Activated CD4-positive, alpha-beta memory T cell treated with anti-CD3 and anti-CD28 coated beads, Interleukin-2, amount 10 ng/mL, durations not matched to agents 7 days and 5 days (primary cell): ENCODE measurements at regions of chr3 and their contacts with region 1.

Region 1: DNA sequence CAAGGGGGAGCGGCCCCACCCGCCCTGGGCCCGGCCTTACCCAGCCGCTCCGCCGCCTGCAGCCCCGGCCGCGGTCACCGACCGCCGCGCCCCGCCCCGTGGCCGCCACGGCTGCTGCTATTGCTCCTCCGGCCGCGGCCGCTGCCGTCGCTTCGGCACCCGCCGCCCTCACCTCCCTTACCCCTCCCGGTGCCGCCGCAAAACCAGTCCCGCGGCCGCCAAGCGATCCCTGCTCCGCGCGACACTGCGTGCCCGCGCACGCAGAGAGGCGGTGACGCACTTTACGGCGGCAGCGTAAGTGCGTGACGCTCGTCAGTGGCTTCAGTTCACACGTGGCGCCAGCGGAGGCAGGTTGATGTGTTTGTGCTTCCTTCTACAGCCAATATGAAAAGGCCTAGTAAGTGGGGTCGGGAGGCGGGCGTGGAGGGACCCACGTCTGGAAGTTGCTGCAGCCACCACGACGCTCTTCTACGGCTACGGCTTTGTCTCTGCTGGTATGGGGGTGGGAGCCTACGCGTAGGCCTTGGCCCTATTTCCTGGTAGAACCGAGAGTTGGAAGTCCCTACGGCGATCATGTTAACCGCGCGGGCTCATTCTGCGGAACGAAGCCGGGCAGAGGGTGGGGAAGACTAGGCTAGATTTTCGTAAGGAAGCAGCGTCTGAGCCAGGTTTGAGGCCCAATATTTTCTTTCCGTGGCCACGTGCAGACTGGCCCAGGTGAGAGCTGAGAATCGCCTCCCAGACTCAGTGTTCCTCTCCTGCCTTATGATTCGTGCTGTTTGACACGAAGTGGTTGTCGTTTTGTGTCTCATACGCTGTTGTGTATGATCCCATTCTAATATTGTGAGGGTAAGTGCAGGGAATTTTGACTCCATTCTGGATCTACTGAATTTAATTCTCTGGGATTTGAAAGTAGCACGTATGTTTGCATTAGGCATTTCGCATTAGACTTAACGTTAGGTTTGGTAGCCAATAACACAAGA is at the starts of genes GNL3 and PBRM1:
- DNase-seq: peak; percentile 95
- H3K4me3 Mint-ChIP-seq: peak within 1 kb of the TSS; percentile 91
- H3K27ac Mint-ChIP-seq: peak within 1 kb of the TSS; percentile 90
- H3K4me1 Mint-ChIP-seq: peaks cover 79% of the 10 kb centered on the region
- H3K27me3 Mint-ChIP-seq: no peaks in the 10 kb centered on the region
- total RNA-seq, gene GNL3: 66.8 to 67.5 TPM
- total RNA-seq, gene PBRM1: 69.0 to 70.2 TPM

Region 2: GRCh38 chr3:52670621-52671521 is 15.1 kb before region 1 on chr3:
- CTCF ChIA-PET with region 1: no interaction called
- POLR2A ChIA-PET with region 1: interaction called, 12 read pairs
- DNase-seq: peak; percentile 71
- H3K4me3 Mint-ChIP-seq: peak overlapping the region; percentile 43
- H3K27ac Mint-ChIP-seq: peak overlapping the region; percentile 86
- H3K4me1 Mint-ChIP-seq: peaks cover 30% of the 10 kb centered on the region
- H3K27me3 Mint-ChIP-seq: no peaks in the 10 kb centered on the region

Region 3: DNA sequence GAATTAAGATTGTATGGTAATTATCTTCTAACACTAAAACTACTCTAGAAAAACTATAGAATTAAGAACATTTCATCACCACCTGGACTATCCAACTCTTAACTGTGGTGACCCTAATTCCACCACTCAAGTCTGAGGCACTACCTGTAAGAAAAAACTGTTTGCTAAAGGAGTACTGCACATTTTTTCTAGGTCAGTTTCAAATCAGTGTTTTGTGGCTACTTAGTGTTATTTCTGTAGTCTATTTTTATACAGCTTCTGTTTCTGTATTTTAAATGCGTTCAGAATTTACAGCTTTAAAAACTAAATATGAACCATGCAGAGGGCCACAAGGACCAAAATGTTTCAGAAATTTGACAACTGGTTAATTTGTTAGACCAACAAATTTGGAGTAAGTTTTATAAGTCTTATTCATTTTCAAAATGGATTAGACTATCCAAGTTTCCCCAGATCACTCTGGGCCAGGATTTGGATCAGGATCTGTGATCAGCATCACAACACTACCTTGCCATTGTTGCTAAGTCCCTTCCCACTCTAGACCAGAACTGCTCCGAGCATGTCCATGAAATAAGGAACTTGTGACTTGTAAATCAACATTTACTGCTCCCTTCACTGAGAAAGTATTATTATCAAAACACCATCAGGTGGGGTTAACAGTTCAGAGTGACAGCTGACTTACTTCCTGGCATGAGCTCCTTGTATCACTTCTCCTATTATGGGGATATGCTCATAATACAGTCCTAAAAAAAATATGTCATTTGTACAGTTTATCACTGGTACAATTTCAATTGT is 11.0 kb after region 1 on chr3:
- CTCF ChIA-PET with region 1: interaction called, 6 read pairs
- POLR2A ChIA-PET with region 1: interaction called, 18 read pairs
- DNase-seq: no peak
- H3K4me3 Mint-ChIP-seq: no peak overlapping the region
- H3K27ac Mint-ChIP-seq: peak overlapping the region; percentile 60
- H3K4me1 Mint-ChIP-seq: peaks cover 17% of the 10 kb centered on the region
- H3K27me3 Mint-ChIP-seq: no peaks in the 10 kb centered on the region

Region 4: DNA sequence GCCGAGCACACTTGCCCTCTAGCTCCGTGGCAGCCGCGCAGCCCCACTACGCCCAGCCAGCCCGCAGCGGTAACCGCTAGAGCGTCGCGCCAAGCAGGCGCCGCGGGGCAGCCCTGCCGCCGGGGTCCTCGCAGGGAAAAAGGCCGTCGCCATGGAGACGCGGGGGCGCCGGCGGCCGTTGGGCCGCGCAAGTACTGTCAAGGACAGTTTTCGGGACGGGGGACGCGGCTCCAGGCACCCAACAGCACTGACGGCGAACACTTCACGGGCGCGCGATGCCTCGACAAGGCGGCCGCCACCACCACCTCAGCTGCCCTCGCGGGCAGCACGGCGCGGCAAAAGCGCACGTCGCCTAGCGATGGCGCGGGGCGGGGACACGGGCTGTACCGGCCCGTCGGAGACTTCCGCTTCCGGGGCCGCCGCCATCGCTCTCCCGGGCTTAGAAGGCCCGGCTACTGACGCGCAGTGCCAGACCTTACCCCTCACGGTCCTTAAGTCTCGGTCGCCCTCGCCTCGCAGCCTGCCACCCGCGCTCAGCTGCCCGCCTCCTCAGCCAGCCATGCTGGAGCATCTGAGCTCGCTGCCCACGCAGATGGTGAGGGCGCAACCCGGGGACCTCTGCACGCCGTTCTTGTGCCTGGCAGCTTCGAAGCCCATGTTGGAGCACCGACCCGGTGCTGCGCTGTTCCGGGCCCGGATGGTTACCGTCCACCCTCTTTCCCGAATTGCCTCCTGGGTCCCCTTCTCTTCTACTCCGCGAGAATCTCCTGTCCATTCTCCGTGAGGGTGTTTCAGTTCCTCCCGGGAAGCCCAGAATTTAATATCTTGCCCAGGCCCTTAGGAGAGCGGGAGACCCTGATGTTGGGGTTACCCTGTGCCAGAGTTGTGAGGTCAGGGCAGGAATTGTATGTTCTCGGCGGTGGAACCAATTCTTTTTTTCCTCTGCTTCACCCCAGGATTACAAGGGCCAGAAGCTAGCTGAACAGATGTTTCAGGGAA is 20.0 kb after region 1 on chr3 and contains the starts of genes GLT8D1 and SPCS1:
- CTCF ChIA-PET with region 1: interaction called, 4 read pairs
- POLR2A ChIA-PET with region 1: interaction called, 78 read pairs
- DNase-seq: peak; percentile 86
- H3K4me3 Mint-ChIP-seq: peak within 1 kb of the TSS; percentile 95
- H3K27ac Mint-ChIP-seq: peak within 1 kb of the TSS; percentile 86
- H3K4me1 Mint-ChIP-seq: peaks cover 39% of the 10 kb centered on the region
- H3K27me3 Mint-ChIP-seq: no peaks in the 10 kb centered on the region
- total RNA-seq, gene GLT8D1: 43.4 to 46.7 TPM
- total RNA-seq, gene SPCS1: 107 to 108 TPM